ENCODE measurements at regions of chr3 and their contacts with region 1.

Region 1: DNA sequence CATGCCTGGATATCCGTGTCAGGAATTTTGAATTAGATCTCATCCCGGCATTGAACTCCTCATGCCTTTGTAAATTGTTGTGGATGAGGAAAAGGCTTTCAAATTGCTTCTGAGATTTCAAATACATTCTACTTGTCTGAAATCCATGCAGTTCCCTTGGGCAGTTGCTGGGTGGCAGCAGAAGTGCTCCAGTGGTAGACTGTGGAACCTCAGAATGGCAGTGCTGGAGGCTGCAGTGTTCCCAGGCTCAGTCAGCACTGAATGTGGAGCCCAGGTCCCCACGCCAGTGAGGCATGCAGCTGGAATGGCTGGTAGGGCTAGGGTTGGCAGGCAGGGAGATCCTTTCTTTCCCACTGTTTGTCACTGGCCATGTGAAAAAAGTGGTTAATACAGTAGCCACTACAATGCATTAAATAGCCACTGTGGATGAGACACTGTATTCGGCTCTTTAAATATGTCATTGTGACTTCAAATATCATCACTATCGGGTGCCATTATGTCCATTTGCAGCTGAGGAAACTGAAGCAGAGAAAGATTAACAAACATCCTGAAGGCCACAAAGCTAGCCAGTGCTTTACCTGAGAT is 98.6 kb downstream of the TPRG1 start:
- DNase-seq: peak; percentile 66
- ATAC-seq: peak; percentile 98
- H3K4me3 ChIP-seq: no peak overlapping the region
- H3K27ac ChIP-seq: no peak overlapping the region
- H3K4me1 ChIP-seq: no peaks in the 10 kb centered on the region
- H3K27me3 ChIP-seq: no peaks in the 10 kb centered on the region; the same call in 1 of the 2 replicates
- CTCF ChIP-seq: peak; percentile 60
- POLR2A ChIP-seq: no peak
- RAD21 ChIP-seq: peak; percentile 68

Region 2: DNA sequence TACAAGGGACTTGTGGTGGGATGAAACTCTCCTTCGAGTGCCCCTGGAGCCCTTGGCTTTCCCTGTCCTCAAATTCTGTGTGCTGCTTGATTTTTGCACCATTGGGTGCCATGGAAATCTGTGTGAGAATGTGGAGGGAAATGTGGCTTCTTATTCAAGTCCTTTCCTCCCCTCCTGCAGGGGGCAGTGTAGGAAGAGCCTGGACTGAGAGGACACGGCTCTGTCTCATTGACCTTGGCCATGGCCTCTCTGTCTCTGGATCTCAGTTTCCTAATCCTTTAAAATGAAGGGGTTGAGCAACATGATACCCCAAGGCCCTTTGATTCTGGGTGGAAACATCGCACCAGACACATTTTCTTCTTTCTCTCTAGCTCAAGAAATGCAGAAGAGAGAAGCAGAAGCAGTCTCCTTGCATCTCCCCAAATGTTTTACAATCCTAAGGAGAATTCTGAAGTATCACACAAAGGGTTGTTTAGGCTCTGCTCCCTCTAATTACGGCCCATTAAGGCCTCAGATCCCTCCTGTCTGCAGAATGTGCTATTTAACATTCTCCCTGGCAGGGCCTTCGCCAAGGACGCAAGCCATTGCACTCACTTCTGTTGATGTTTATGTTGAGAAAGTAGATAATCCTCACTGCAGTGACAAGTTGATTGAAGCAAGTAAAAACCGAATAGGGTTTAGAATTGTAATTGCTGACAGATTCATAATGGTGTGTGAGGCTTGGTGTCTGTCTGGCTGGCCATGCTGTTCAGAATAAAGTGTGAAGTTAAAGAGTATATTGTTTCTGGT is 70.5 kb after region 1 on chr3:
- CTCF ChIA-PET with region 1: no interaction called
- POLR2A ChIA-PET with region 1: interaction called, 9 read pairs
- dilution Hi-C with region 1: no loop called
- in situ Hi-C with region 1: no loop called
- intact Hi-C with region 1: loop called (anchors 10 kb)
- DNase-seq: no peak
- ATAC-seq: no peak
- H3K4me3 ChIP-seq: no peak overlapping the region
- H3K27ac ChIP-seq: no peak overlapping the region
- H3K4me1 ChIP-seq: no peaks in the 10 kb centered on the region
- H3K27me3 ChIP-seq: 0 out of 2 replicates have a peak, but pooled peaks cover 3% of the 10 kb centered on the region
- CTCF ChIP-seq: 0 out of 2 replicates have a peak, but pooled peaks have one; percentile 5
- POLR2A ChIP-seq: no peak
- RAD21 ChIP-seq: no peak

Region 3: GRCh38 chr3:189419038-189419437 is 148.7 kb after region 1 on chr3:
- CTCF ChIA-PET with region 1: no interaction called
- POLR2A ChIA-PET with region 1: no interaction called
- dilution Hi-C with region 1: no loop called
- in situ Hi-C with region 1: no loop called
- intact Hi-C with region 1: loop called (anchors 5 kb)
- DNase-seq: no peak
- ATAC-seq: no peak
- H3K4me3 ChIP-seq: no peak overlapping the region
- H3K27ac ChIP-seq: no peak overlapping the region
- H3K4me1 ChIP-seq: no peaks in the 10 kb centered on the region
- H3K27me3 ChIP-seq: no peaks in the 10 kb centered on the region
- CTCF ChIP-seq: no peak
- POLR2A ChIP-seq: no peak
- RAD21 ChIP-seq: no peak

Region 4: DNA sequence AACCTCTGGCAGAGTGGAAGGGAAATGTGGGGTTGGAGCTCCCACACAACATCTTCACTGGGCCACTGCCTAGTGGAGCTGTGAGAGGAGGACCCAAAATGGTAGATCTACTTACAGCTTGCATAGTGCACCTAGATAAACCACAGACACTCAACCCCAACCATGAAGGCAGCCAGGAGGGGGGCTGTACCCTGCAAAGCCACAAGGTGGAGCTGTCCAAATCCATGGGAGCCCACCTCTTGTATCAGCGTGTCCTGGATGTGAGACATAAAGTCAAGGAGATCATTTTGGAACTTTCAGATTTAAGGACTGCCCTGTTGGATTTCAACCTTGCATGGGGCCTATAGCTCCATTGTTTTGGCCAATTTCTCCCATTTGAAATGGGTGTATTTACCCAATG is 381.7 kb after region 1 on chr3:
- CTCF ChIA-PET with region 1: no interaction called
- POLR2A ChIA-PET with region 1: no interaction called
- dilution Hi-C with region 1: no loop called
- in situ Hi-C with region 1: no loop called
- intact Hi-C with region 1: loop called (anchors 2 kb)
- DNase-seq: peak; percentile 30
- ATAC-seq: peak; percentile 77
- H3K4me3 ChIP-seq: no peak overlapping the region
- H3K27ac ChIP-seq: no peak overlapping the region
- H3K4me1 ChIP-seq: no peaks in the 10 kb centered on the region
- H3K27me3 ChIP-seq: peaks cover 1% of the 10 kb centered on the region; the same call in 1 of the 2 replicates
- CTCF ChIP-seq: peak; percentile 58
- POLR2A ChIP-seq: no peak
- RAD21 ChIP-seq: peak; percentile 72

Region 5: GRCh38 chr3:189947948-189948723 is 677.8 kb after region 1 on chr3:
- CTCF ChIA-PET with region 1: interaction called, 20 read pairs
- POLR2A ChIA-PET with region 1: no interaction called
- dilution Hi-C with region 1: no loop called
- in situ Hi-C with region 1: loop called (anchors 10 kb)
- intact Hi-C with region 1: loop called (anchors 1 kb)
- DNase-seq: peak; percentile 40
- ATAC-seq: peak; percentile 73
- H3K4me3 ChIP-seq: no peak overlapping the region
- H3K27ac ChIP-seq: no peak overlapping the region
- H3K4me1 ChIP-seq: no peaks in the 10 kb centered on the region
- H3K27me3 ChIP-seq: peaks cover 13% of the 10 kb centered on the region
- CTCF ChIP-seq: peak; percentile 78
- POLR2A ChIP-seq: no peak
- RAD21 ChIP-seq: peak; percentile 87

Measured in IMR-90 (cell line).